ENCODE measurements at regions of chr17 and their contacts with region 1.

Region 1: GRCh38 chr17:49031965-49032928 is 35.1 kb downstream of the IGF2BP1 start:
- DNase-seq: peak in 1 of 2 donors; percentile 45
- ATAC-seq: peak; percentile 92

Region 2: DNA sequence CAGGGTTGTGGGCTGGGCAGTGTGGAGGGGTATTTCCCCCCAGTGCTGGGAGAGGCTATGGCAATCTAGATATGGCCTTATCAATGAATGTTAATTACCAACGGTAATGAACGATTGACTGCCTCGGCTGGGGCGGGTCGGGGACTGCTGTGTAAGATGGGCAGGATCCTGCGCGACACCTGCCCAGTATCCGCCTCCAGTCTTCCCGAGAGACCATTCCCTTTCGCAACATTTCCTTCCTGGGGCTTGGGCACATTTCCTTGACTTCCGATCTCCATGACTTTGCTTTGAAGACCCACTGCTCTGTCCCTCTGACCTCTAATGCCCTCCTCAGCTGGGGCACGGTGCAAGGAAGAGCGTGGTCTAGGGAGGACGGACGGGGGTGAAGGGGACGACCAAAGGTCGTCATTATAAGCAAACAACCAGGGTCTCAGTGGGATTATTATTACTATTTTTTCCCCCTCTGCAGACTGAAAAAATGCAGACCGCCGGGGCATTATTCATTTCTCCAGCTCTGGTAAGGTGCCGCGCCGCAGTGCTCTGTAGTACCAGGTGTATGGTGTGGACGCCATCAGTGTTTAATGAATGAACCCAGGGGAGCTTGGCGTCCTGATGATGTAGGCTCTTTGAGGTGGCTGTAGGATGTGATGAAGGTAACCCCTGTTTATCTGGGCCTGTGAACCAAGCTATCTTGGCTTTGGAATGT is 139.2 kb before region 1 on chr17:
- intact Hi-C with region 1: loop called in 1 of 2 experiments (anchors 10 kb)
- DNase-seq: no peak
- ATAC-seq: peak; percentile 23

Region 3: DNA sequence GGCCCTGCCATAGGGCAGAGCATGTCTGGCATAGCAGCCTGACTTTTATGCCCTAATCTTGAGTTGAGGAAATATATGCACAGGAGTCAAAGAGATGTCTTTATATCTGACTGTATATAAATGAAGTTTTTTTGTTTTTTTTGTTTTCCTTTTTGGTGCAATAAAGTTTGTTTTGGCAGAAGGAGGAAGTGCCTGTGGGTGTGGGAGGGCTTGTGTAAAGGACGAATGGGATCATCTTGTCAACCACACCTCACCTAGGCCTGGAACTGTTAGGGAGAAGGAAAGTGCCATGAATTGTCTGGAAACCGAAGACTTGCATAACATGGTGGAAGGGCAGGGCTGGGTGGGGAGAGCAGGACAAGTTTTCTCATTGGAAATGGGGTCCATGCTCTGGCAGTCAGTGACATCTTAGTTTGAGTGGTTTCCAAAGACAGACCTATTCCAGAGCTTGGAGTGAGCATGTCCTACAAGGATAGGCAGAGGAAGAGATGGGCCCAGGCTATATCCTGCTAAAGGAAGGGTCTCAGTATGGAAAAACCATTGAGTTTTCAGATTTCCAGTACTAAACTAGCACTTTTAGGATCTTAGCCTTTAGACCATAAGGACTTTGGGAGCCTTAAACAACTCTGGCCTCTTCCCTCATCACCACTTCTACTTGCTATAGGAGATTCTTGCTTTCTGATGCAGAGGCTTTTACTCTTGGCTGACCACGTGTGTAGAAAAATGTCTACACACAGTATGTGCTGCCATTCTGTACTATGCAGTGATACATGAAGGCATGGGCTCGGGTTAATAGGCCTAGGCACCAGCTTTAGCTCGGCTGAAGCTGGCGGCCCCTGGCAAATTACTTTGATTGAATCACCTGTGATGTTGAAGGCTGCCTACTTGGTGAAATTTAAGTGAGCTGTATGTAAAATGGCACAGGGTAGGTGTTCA is 103.1 kb before region 1 on chr17:
- intact Hi-C with region 1: no loop called
- DNase-seq: no peak
- ATAC-seq: peak; percentile 51